ENCODE measurements at regions of chr4 and their contacts with region 1.

Region 1: GRCh38 chr4:128924951-128925350 is 115.5 kb downstream of the JADE1 start:
- DNase-seq: no peak

Region 2: DNA sequence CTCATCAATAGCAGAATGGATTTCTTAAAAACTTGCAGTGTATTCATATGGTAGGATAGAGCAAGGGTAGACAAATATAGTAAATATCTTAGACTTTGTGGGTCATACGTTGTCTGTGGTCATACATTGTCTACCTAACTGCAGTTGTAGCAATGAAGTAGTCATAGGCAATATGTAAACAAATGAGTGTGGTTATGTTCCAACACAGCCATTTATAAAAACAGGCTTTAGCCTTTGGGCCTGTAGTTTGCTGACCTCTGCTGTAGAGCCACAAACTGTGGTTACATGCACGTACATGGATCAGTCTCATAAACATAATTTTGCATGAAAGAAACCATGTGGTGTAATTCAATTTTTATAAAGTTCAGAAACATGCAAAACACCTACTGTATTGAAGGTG is 765.0 kb before region 1 on chr4:
- intact Hi-C with region 1: loop called in 1 of 2 experiments (anchors 5 kb)
- DNase-seq: no peak